ENCODE measurements at regions of chr3 and their contacts with region 1.

Region 1: GRCh38 chr3:71273453-71273852 is 310.1 kb downstream of the FOXP1 start:
- DNase-seq: no peak
- ATAC-seq: no peak
- H3K4me3 ChIP-seq: no peak overlapping the region
- H3K4me3 Mint-ChIP-seq: no peak overlapping the region
- H3K27ac ChIP-seq: no peak overlapping the region
- H3K27ac Mint-ChIP-seq: peak overlapping the region; percentile 94
- H3K4me1 ChIP-seq: peaks cover 63% of the 10 kb centered on the region
- H3K4me1 Mint-ChIP-seq: peaks cover 91% of the 10 kb centered on the region
- H3K27me3 ChIP-seq: no peaks in the 10 kb centered on the region
- H3K27me3 Mint-ChIP-seq: no peaks in the 10 kb centered on the region
- CTCF ChIP-seq: no peak

Region 2: DNA sequence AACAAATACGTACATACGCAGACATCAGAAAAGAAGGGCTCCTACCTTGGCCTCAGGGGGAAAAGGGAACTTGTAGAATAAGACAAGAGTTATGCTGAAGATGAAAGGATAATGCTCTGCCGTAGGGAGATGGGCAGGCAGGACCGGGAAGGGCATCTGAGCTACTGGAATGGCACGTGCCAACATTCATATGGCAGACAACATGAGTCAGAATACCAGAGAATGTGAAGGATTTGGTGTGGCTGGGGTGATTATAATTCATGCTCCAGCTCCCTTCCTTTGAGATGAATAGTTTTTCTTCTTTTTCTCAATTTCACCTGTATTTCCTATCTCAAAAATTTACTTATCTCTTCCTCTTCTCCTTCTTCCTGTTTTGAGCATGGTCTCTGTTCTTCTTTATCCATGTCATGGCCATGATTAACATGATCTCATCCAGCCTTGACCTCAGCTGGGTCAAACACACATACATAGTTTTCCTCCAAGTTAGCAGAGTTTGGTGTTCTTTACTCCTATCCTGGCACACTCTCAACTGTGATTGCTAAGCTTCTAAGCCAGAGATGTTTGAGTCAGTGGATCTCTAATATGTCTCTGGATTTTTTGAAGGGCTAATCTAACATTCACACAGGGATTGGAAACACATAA is 197.0 kb before region 1 on chr3:
- CTCF ChIA-PET with region 1: no interaction called
- POLR2A ChIA-PET with region 1: no interaction called
- intact Hi-C with region 1: no loop called
- DNase-seq: no peak
- ATAC-seq: no peak
- H3K4me3 ChIP-seq: no peak overlapping the region
- H3K4me3 Mint-ChIP-seq: no peak overlapping the region
- H3K27ac ChIP-seq: peak overlapping the region in 1 of 2 experiments; percentile 5
- H3K27ac Mint-ChIP-seq: peak overlapping the region; percentile 81
- H3K4me1 ChIP-seq: peaks cover 94% of the 10 kb centered on the region
- H3K4me1 Mint-ChIP-seq: peaks cover 92% of the 10 kb centered on the region
- H3K27me3 ChIP-seq: no peaks in the 10 kb centered on the region
- H3K27me3 Mint-ChIP-seq: no peaks in the 10 kb centered on the region
- CTCF ChIP-seq: no peak

Region 3: DNA sequence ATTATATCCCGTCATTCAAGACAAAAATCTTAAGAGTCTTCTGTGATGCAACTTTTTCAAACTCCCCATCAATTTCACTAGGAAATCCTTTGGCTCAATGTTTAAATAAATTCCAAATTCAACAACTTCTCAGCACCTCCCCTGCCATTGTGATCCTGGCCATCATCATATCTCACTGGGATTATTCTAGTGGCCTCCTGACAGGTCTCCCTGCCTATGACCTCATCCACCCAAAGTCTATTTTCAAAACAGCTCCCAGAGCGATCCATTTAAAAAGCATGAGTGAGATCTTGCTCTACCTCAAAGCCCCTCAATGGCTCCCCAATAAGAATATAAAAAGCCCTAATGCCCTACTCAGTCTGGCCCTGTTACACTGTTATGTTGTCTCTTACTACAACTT is 16.8 kb after region 1 on chr3:
- CTCF ChIA-PET with region 1: no interaction called
- POLR2A ChIA-PET with region 1: no interaction called
- intact Hi-C with region 1: loop called in 1 of 2 experiments (anchors 2 kb)
- DNase-seq: no peak
- ATAC-seq: no peak
- H3K4me3 ChIP-seq: no peak overlapping the region
- H3K4me3 Mint-ChIP-seq: no peak overlapping the region
- H3K27ac ChIP-seq: no peak overlapping the region
- H3K27ac Mint-ChIP-seq: peak overlapping the region; percentile 70
- H3K4me1 ChIP-seq: peaks cover 38% of the 10 kb centered on the region
- H3K4me1 Mint-ChIP-seq: peaks cover 65% of the 10 kb centered on the region
- H3K27me3 ChIP-seq: no peaks in the 10 kb centered on the region
- H3K27me3 Mint-ChIP-seq: no peaks in the 10 kb centered on the region
- CTCF ChIP-seq: no peak

Measured in CD8-positive, alpha-beta T cell (primary cell).